HepG2 (cell line): ENCODE measurements at regions of chr14 and their contacts with region 1.

Region 1: GRCh38 chr14:75648066-75648838 is 12.4 kb downstream of the ERG28 start:
- DNase-seq: peak; percentile 98
- ATAC-seq: peak; percentile 92
- H3K4me3 ChIP-seq: no peak overlapping the region; a peak in 1 of 6 replicates
- H3K27ac ChIP-seq: peak overlapping the region; percentile 97
- H3K4me1 ChIP-seq: peaks cover 99% of the 10 kb centered on the region
- H3K27me3 ChIP-seq: no peaks in the 10 kb centered on the region
- CTCF ChIP-seq: peak; percentile 33
- EP300 ChIP-seq: peak; percentile 93 to 97; a peak in 3 of 4 replicates
- POLR2A ChIP-seq: peak; percentile 53 to 62
- RAD21 ChIP-seq: peak; percentile 40

Region 2: GRCh38 chr14:75522224-75522982 is 125.8 kb before region 1 on chr14 and contains the start of gene BATF:
- CTCF ChIA-PET with region 1: no interaction called
- POLR2A ChIA-PET with region 1: no interaction called
- in situ Hi-C with region 1: no loop called
- intact Hi-C with region 1: loop called (anchors 2 kb)
- DNase-seq: no peak
- ATAC-seq: no peak
- H3K4me3 ChIP-seq: peak within 1 kb of the TSS in 1 of 3 experiments; percentile 4; a peak in 1 of 6 replicates
- H3K27ac ChIP-seq: no peak within 1 kb of the TSS
- H3K4me1 ChIP-seq: peaks cover 33% of the 10 kb centered on the region
- H3K27me3 ChIP-seq: peaks cover 0 to 2% of the 10 kb centered on the region in 2 experiments; a peak in 2 of 5 replicates
- CTCF ChIP-seq: no peak
- EP300 ChIP-seq: no peak
- POLR2A ChIP-seq: no peak
- RAD21 ChIP-seq: no peak
- total RNA-seq, gene BATF: 0.22 and 0.44 TPM in 2 replicates

Region 3: GRCh38 chr14:75577729-75578101 is 70.5 kb before region 1 on chr14:
- CTCF ChIA-PET with region 1: interaction called, 123 read pairs
- POLR2A ChIA-PET with region 1: interaction called, 127 read pairs
- in situ Hi-C with region 1: loop called (anchors 5 kb)
- intact Hi-C with region 1: loop called (anchors 1 kb)
- DNase-seq: peak; percentile 73
- ATAC-seq: peak; percentile 82
- H3K4me3 ChIP-seq: peak overlapping the region; percentile 64 to 91 (median 82)
- H3K27ac ChIP-seq: peak overlapping the region; percentile 60
- H3K4me1 ChIP-seq: peaks cover 44% of the 10 kb centered on the region
- H3K27me3 ChIP-seq: no peaks in the 10 kb centered on the region; a peak in 1 of 5 replicates
- CTCF ChIP-seq: peak; percentile 94
- EP300 ChIP-seq: no peak
- POLR2A ChIP-seq: no peak
- RAD21 ChIP-seq: peak; percentile 92

Region 4: GRCh38 chr14:75626863-75627262 is 21.4 kb before region 1 on chr14:
- CTCF ChIA-PET with region 1: no interaction called
- POLR2A ChIA-PET with region 1: interaction called, 47 read pairs
- in situ Hi-C with region 1: no loop called
- intact Hi-C with region 1: loop called (anchors 2 kb)
- DNase-seq: no peak
- ATAC-seq: peak; percentile 17; the same call in 2 of the 3 replicates
- H3K4me3 ChIP-seq: no peak overlapping the region; a peak in 1 of 6 replicates
- H3K27ac ChIP-seq: peak overlapping the region; percentile 48
- H3K4me1 ChIP-seq: peaks cover 69% of the 10 kb centered on the region
- H3K27me3 ChIP-seq: no peaks in the 10 kb centered on the region
- CTCF ChIP-seq: no peak
- EP300 ChIP-seq: no peak
- POLR2A ChIP-seq: no peak
- RAD21 ChIP-seq: no peak

Region 5: DNA sequence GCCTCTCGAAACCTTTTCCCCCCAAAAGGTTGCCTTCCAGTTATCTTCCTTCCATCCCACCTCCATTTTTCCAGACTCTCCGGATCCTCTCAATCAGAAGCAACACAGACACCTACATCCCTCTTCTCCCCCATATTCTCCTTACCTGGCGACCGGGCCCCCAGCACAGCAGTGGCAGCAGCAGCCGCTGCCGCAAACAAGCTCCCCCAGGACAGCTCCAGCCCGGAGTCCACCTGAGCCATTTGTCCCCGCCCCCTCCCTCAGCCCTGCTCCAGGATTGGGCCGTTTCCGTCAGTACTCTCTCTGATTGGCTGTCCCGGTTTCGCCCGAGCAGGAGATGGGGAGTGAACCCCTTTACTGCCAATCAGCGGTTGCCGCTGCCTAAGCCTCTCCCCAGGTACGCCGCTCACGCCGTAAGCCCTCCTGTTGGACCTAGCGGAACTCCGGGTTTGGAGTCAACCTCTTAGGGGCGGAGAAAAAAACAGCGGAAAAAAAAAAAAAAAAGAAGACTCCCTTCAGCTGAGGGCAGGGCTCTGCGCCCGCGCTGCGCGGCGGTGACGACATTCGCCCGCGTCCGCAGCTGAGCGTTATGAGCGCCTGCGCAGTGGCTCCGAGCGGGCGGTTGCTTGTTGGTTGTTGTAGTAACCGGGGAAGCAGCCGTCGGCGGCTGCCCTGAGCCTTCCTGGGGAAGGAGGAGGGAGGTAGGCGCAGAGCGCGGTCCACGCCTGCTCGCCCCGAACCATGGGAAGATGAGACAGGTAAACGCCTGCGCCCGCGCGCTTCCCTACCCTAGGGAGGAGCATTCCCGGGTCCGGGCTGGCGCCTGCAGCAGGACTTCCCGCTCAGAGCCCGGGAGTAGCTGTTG is 12.6 kb after region 1 on chr14 and contains the starts of genes ERG28 and TTLL5:
- CTCF ChIA-PET with region 1: no interaction called
- POLR2A ChIA-PET with region 1: interaction called, 32 read pairs
- in situ Hi-C with region 1: no loop called
- intact Hi-C with region 1: no loop called
- DNase-seq: peak; percentile 99
- ATAC-seq: peak; percentile 98
- H3K4me3 ChIP-seq: peak within 1 kb of the TSS; percentile 85 to 96 (median 94)
- H3K27ac ChIP-seq: peak within 1 kb of the TSS; percentile 89
- H3K4me1 ChIP-seq: peaks cover 30% of the 10 kb centered on the region
- H3K27me3 ChIP-seq: no peaks in the 10 kb centered on the region; a peak in 1 of 5 replicates
- CTCF ChIP-seq: peak; percentile 18; the same call in 1 of the 2 replicates
- EP300 ChIP-seq: no peak
- POLR2A ChIP-seq: peak; percentile 70 to 90
- RAD21 ChIP-seq: 0 out of 2 replicates have a peak, but pooled peaks have one; percentile 47
- total RNA-seq, gene ERG28: 21.5 and 27.3 TPM in 2 replicates
- total RNA-seq, gene TTLL5: 18.8 and 22.0 TPM in 2 replicates

Region 6: GRCh38 chr14:75709207-75709812 is 61.1 kb after region 1 on chr14:
- CTCF ChIA-PET with region 1: no interaction called
- POLR2A ChIA-PET with region 1: no interaction called
- in situ Hi-C with region 1: no loop called
- intact Hi-C with region 1: no loop called
- DNase-seq: peak; percentile 67
- ATAC-seq: peak; percentile 47
- H3K4me3 ChIP-seq: no peak overlapping the region
- H3K27ac ChIP-seq: no peak overlapping the region
- H3K4me1 ChIP-seq: peaks cover 25% of the 10 kb centered on the region
- H3K27me3 ChIP-seq: no peaks in the 10 kb centered on the region
- CTCF ChIP-seq: peak; percentile 78
- EP300 ChIP-seq: no peak
- POLR2A ChIP-seq: no peak
- RAD21 ChIP-seq: peak; percentile 49; the same call in 1 of the 2 replicates

Region 7: GRCh38 chr14:75794615-75795038 is 146.4 kb after region 1 on chr14:
- CTCF ChIA-PET with region 1: no interaction called
- POLR2A ChIA-PET with region 1: no interaction called
- in situ Hi-C with region 1: no loop called
- intact Hi-C with region 1: no loop called
- DNase-seq: peak; percentile 9
- ATAC-seq: peak; percentile 53
- H3K4me3 ChIP-seq: no peak overlapping the region
- H3K27ac ChIP-seq: no peak overlapping the region
- H3K4me1 ChIP-seq: no peaks in the 10 kb centered on the region
- H3K27me3 ChIP-seq: no peaks in the 10 kb centered on the region
- CTCF ChIP-seq: peak; percentile 47
- EP300 ChIP-seq: no peak
- POLR2A ChIP-seq: no peak
- RAD21 ChIP-seq: no peak

Region 8: DNA sequence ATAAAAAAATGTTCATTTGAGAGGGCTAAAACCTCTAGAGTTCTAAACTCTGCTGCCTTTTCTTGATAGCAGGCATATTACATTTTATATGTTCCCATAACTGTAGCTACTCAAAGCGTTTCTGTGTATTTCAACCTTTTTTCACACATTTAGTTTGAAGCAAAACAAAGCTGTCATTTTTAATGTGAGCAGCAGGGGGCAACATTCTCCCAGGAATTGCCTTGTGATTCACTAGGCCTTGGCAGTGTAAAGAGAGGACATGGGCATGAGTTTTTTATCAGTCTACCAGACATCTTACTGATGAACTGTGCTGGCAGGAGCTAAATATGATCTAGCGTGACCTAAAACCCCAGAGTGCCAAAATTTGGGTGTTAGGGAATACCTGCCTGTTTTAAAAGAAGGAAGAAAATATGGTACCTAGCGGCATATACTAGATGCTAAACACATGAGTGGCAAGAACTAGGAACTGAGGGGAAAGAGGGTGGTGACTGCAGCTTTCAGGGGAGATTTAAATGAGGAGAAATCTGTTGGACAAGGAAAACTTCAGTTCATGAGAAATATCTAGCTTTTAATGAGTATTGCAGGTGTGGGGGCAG is 402.6 kb after region 1 on chr14:
- CTCF ChIA-PET with region 1: no interaction called
- POLR2A ChIA-PET with region 1: no interaction called
- in situ Hi-C with region 1: no loop called
- intact Hi-C with region 1: no loop called
- DNase-seq: peak; percentile 47
- ATAC-seq: peak; percentile 62
- H3K4me3 ChIP-seq: no peak overlapping the region
- H3K27ac ChIP-seq: no peak overlapping the region
- H3K4me1 ChIP-seq: no peaks in the 10 kb centered on the region
- H3K27me3 ChIP-seq: peaks cover 0 to 10% of the 10 kb centered on the region in 2 experiments; a peak in 2 of 5 replicates
- CTCF ChIP-seq: peak; percentile 83
- EP300 ChIP-seq: no peak
- POLR2A ChIP-seq: no peak
- RAD21 ChIP-seq: peak; percentile 78